GM10248 (cell line): ENCODE measurements at regions of chr3 and their contacts with region 1.

Region 1: DNA sequence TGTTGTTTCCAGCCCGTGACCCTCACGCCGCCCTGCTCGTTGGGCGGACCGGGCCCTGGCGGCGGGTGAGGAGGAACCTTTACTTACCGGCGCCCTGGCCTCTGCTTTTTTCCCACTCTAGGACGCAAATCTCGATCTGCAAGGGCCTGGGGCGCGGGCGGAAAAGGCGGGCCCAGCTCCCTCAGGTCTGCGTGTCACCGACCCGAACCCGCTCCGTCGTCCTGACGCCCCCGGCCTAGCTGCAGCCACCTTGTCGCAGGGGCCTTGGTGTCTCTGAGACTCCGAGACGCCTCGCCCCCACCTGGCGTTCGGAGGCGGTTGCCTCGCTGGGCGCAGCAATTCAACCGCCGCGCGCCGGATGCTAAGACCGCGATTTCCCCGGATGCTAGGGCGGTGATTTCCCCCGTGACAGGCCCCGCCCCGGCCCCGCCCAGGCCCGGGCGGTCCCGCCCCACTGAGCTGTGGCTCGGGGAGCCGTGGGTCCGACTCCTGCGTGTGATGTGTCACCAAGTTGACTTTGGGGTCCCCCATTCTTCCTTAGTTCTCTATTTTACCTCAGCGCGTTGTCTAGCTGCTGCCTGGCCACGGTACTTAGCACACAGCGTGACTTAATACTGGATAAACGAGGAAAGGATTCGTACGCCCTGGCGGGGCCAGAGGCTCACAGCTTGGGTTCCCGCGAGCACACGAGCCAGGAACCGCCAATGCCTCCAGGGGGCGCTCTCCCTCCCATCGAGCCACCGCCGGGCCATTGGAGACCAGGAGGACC is at the start of gene RPL39L:
- DNase-seq: peak; percentile 95
- CTCF ChIP-seq: peak; percentile 79

Region 2: DNA sequence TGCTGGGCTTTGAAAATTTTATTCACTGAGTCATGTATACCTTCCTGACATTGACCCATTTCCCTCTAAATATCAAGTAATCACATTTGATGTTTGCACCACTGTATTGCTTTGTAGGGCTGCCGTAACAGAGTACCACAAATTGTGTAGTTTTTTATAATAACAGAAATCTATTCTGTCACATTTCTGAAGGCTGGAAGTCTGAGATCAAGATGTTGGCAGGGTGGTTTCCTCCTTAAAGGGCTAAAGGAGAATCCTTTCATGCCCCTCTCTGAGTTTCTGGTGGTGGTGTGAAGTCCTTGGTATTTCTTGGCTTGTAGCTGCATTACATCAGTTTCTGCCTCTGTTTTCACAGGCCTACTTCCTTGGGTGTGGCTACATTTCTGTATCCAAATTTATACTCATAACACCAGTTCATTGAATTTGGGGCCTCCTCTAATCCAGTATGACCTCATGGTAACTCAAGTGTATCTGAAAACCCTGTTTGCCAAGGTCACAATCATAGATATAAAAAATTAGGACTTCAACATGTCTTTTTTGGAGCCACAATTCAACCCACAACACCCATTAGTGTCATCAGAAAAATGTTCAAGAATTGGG is 238.1 kb before region 1 on chr3:
- CTCF ChIA-PET with region 1: no interaction called
- POLR2A ChIA-PET with region 1: no interaction called
- DNase-seq: no peak
- CTCF ChIP-seq: no peak

Region 3: DNA sequence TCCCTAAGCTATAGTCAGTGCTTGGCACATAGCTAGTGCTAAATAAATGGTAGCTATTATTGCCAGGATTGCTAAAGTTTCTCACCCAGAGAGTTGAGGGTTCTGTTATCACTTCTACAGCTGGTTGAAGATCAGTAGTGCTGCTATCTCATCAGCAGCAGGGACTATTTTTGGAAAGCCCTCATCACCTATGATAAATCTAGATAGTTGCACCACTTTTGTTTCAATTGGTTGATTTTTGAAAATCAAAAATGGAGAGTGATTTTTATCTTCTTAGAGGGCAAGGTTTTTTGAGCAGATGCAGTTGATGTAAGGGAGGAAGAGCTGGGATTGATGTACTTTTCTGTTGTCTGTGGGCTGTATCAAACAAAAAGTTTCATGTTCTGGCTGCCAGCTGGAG is 107.4 kb before region 1 on chr3:
- CTCF ChIA-PET with region 1: interaction called, 18 read pairs
- POLR2A ChIA-PET with region 1: no interaction called
- DNase-seq: no peak
- CTCF ChIP-seq: no peak

Region 4: GRCh38 chr3:187101184-187102072 is 37.9 kb before region 1 on chr3:
- CTCF ChIA-PET with region 1: interaction called, 19 read pairs
- POLR2A ChIA-PET with region 1: no interaction called
- DNase-seq: no peak
- CTCF ChIP-seq: no peak

Region 5: GRCh38 chr3:187120326-187120725 is 19.0 kb before region 1 on chr3:
- CTCF ChIA-PET with region 1: interaction called, 78 read pairs
- POLR2A ChIA-PET with region 1: no interaction called
- DNase-seq: no peak
- CTCF ChIP-seq: no peak

Region 6: GRCh38 chr3:187150599-187150998 is 11.3 kb after region 1 on chr3:
- CTCF ChIA-PET with region 1: interaction called, 73 read pairs
- POLR2A ChIA-PET with region 1: no interaction called
- DNase-seq: no peak
- CTCF ChIP-seq: peak; percentile 54